ENCODE measurements at regions of chr17 and their contacts with region 1.

Region 1: GRCh38 chr17:75109407-75110233 is at the start of gene ARMC7:
- DNase-seq: peak; percentile 89 to 94
- ATAC-seq: peak; percentile 82 to 89 (median 83)
- H3K4me3 ChIP-seq: peak within 1 kb of the TSS; percentile 93
- H3K4me3 Mint-ChIP-seq: peak within 1 kb of the TSS; percentile 89
- H3K27ac ChIP-seq: peak within 1 kb of the TSS; percentile 65
- H3K27ac Mint-ChIP-seq: peak within 1 kb of the TSS; percentile 74 to 79
- H3K4me1 ChIP-seq: peaks cover 36% of the 10 kb centered on the region
- H3K4me1 Mint-ChIP-seq: peaks cover 30 to 35% of the 10 kb centered on the region in 2 donors
- H3K27me3 ChIP-seq: no peaks in the 10 kb centered on the region
- H3K27me3 Mint-ChIP-seq: no peaks in the 10 kb centered on the region
- CTCF ChIP-seq: no peak
- total RNA-seq, gene ARMC7: 9.3 to 18.6 (median 11.3) TPM

Region 2: GRCh38 chr17:75131280-75132017 is 21.8 kb after region 1 on chr17 and contains the start of gene NT5C:
- intact Hi-C with region 1: loop called (anchors 2 kb)
- DNase-seq: peak; percentile 70 to 78
- ATAC-seq: peak; percentile 84 to 88 (median 86)
- H3K4me3 ChIP-seq: peak within 1 kb of the TSS; percentile 83
- H3K4me3 Mint-ChIP-seq: peak within 1 kb of the TSS; percentile 89
- H3K27ac ChIP-seq: peak within 1 kb of the TSS; percentile 71
- H3K27ac Mint-ChIP-seq: peak within 1 kb of the TSS; percentile 84 to 89
- H3K4me1 ChIP-seq: peaks cover 21% of the 10 kb centered on the region
- H3K4me1 Mint-ChIP-seq: peaks cover 7 to 18% of the 10 kb centered on the region in 2 donors
- H3K27me3 ChIP-seq: no peaks in the 10 kb centered on the region
- H3K27me3 Mint-ChIP-seq: no peaks in the 10 kb centered on the region
- CTCF ChIP-seq: peak; percentile 50
- total RNA-seq, gene NT5C: 58.1 to 67.4 (median 61.2) TPM

Region 3: DNA sequence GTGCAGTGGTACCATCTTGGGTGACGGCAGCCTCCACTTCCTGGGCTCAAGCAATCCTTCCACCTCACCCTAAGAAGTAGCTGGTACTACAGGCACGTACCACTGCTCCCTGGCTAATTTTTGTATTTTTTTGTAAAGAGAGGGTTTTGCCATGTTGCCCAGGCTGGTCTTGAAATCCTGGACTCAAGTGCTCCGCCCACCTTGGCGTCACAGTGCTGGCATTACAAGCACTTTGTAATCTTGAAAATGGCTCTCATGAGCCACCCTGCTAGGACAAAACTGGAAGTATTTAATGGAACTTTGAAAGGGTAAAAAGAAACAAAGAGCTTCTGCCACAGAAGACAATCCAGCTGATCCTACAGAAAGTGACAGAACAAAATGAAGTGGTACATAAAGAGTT is 63.9 kb after region 1 on chr17:
- intact Hi-C with region 1: loop called (anchors 1 kb)
- DNase-seq: no peak
- ATAC-seq: no peak
- H3K4me3 ChIP-seq: no peak overlapping the region
- H3K4me3 Mint-ChIP-seq: no peak overlapping the region
- H3K27ac ChIP-seq: no peak overlapping the region
- H3K27ac Mint-ChIP-seq: peak overlapping the region in 1 of 2 donors; percentile 66
- H3K4me1 ChIP-seq: peaks cover 4% of the 10 kb centered on the region
- H3K4me1 Mint-ChIP-seq: peaks cover 6 to 15% of the 10 kb centered on the region in 2 donors
- H3K27me3 ChIP-seq: no peaks in the 10 kb centered on the region
- H3K27me3 Mint-ChIP-seq: no peaks in the 10 kb centered on the region
- CTCF ChIP-seq: no peak

Region 4: DNA sequence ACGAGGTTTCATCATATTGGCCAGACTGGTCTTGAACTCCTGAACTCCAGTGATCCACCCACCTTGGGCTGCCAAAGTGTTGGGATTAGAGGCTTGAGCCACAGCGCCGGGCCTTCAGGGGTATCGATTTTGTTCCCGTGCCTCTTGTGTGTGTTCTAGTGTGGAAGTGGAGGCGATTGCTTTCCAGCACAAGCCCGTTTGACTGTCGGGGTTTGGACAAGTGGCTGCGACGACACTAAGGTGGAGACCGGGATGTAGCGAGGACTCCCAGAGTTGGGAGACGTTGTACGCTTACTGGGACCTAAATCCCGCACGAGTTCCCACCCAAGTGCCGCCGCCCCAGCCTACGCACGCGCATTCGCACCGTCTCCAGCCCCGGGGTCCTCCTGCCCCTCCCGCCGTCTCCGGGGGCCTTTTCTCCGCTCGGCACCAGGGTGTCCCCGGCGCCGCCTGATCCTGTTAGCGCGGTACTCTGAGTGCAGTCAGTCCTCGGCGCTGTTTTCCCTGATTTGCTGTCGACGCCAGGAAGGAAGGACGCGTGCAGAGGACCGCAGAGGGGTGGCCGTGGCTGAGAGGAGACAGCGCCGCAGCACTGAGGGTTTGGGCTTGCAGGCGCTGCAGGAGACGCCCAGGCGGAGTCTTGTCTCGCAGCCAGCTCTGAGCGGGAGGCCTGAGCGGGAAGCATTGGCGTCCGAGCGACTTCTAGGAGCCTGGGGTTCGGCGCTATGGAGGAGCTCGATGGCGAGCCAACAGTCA is 95.6 kb after region 1 on chr17 and contains the start of gene NUP85:
- intact Hi-C with region 1: loop called (anchors 1 kb)
- DNase-seq: peak; percentile 90 to 95
- ATAC-seq: peak; percentile 92 to 96 (median 92)
- H3K4me3 ChIP-seq: peak within 1 kb of the TSS; percentile 84
- H3K4me3 Mint-ChIP-seq: peak within 1 kb of the TSS; percentile 96
- H3K27ac ChIP-seq: peak within 1 kb of the TSS; percentile 80
- H3K27ac Mint-ChIP-seq: peak within 1 kb of the TSS; percentile 93 to 97
- H3K4me1 ChIP-seq: peaks cover 20% of the 10 kb centered on the region
- H3K4me1 Mint-ChIP-seq: peaks cover 20 to 28% of the 10 kb centered on the region in 2 donors
- H3K27me3 ChIP-seq: no peaks in the 10 kb centered on the region
- H3K27me3 Mint-ChIP-seq: no peaks in the 10 kb centered on the region
- CTCF ChIP-seq: no peak
- total RNA-seq, gene NUP85: 71.1 to 78.1 (median 77.0) TPM

Region 5: GRCh38 chr17:75412455-75413317 is 303.1 kb after region 1 on chr17:
- intact Hi-C with region 1: loop called (anchors 1 kb)
- DNase-seq: peak; percentile 72 to 91
- ATAC-seq: peak; percentile 83 to 96 (median 86)
- H3K4me3 ChIP-seq: no peak overlapping the region
- H3K4me3 Mint-ChIP-seq: peak overlapping the region; percentile 71
- H3K27ac ChIP-seq: no peak overlapping the region
- H3K27ac Mint-ChIP-seq: peak overlapping the region; percentile 23 to 69
- H3K4me1 ChIP-seq: peaks cover 9% of the 10 kb centered on the region
- H3K4me1 Mint-ChIP-seq: peaks cover 23 to 28% of the 10 kb centered on the region in 2 donors
- H3K27me3 ChIP-seq: no peaks in the 10 kb centered on the region
- H3K27me3 Mint-ChIP-seq: peaks cover 0 to 6% of the 10 kb centered on the region in 2 donors
- CTCF ChIP-seq: peak; percentile 69